ENCODE measurements at regions of chr11 and their contacts with region 1.

Region 1: GRCh38 chr11:61947486-61948210 is 2.5 kb upstream of the BEST1 start:
- DNase-seq: peak; percentile 88 to 95
- H3K4me3 ChIP-seq: no peak overlapping the region
- H3K27ac ChIP-seq: peak overlapping the region in 1 of 5 donors; percentile 15
- H3K4me1 ChIP-seq: peaks cover 7 to 29% (median 15%) of the 10 kb centered on the region in 4 donors
- H3K27me3 ChIP-seq: peaks cover 0 to 4% (median 0%) of the 10 kb centered on the region in 3 donors
- CTCF ChIP-seq: peak in 6 of 7 experiments; percentile 33 to 91 (median 85)
- EP300 ChIP-seq: no peak
- POLR2A ChIP-seq: no peak

Region 2: DNA sequence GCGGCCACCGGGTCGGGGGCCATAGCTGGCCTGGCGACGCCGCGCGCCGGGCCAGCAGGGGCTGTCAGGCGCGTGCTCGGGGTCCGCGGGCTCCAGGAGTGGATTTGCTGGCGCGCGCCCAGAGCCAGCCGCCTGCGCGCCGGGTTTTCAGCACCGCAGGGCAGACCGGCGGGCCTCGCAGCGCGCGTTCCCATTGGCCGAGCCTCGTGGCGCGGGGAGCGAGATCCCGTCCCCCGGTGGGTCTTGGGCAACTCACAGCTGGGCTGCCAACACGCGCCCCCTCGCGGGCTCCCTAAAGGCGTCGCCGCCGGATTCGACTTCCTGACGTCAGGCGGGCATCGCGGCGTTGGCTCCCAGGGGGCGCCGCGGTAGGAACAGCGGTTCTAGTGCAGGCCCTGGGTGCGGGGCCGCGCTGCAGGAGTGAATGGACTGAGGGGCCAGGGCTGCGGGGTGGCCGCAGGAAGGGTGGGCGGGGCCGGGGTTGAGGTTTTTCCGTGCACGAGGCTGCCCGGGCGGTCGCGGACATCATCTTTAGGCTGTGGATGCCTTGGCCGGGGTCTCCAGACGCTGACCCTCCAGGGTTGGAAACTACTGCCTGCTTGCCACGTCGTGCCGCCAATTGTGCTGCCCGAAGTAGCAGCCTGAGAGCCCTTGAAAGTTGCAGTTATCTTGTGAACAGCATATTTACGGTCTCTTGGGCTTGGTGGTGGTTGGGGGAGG is 130.8 kb before region 1 on chr11 and contains the start of gene FADS1:
- intact Hi-C with region 1: loop called (anchors 10 kb)
- DNase-seq: peak; percentile 83 to 97
- H3K4me3 ChIP-seq: peak within 1 kb of the TSS; percentile 60 to 78 (median 72)
- H3K27ac ChIP-seq: peak within 1 kb of the TSS; percentile 69 to 98 (median 93)
- H3K4me1 ChIP-seq: peaks cover 7 to 31% (median 25%) of the 10 kb centered on the region in 4 donors
- H3K27me3 ChIP-seq: peaks cover 0 to 13% (median 0%) of the 10 kb centered on the region in 3 donors
- CTCF ChIP-seq: peak in 4 of 7 experiments; percentile 5 to 51 (median 28)
- EP300 ChIP-seq: no peak
- POLR2A ChIP-seq: no peak
- total RNA-seq, gene FADS1: 11.7 to 56.5 (median 17.3) TPM in 4 of 5 donors, not detected in the other

Region 3: GRCh38 chr11:61904539-61905048 is 43.1 kb before region 1 on chr11:
- intact Hi-C with region 1: loop called (anchors 5 kb)
- DNase-seq: peak; percentile 81 to 88
- H3K4me3 ChIP-seq: peak overlapping the region; percentile 14 to 36 (median 30)
- H3K27ac ChIP-seq: peak overlapping the region in 2 of 5 donors; percentile 13 to 56
- H3K4me1 ChIP-seq: peaks cover 0 to 21% (median 8%) of the 10 kb centered on the region in 4 donors
- H3K27me3 ChIP-seq: no peaks in the 10 kb centered on the region
- CTCF ChIP-seq: no peak
- EP300 ChIP-seq: no peak
- POLR2A ChIP-seq: no peak

Region 4: DNA sequence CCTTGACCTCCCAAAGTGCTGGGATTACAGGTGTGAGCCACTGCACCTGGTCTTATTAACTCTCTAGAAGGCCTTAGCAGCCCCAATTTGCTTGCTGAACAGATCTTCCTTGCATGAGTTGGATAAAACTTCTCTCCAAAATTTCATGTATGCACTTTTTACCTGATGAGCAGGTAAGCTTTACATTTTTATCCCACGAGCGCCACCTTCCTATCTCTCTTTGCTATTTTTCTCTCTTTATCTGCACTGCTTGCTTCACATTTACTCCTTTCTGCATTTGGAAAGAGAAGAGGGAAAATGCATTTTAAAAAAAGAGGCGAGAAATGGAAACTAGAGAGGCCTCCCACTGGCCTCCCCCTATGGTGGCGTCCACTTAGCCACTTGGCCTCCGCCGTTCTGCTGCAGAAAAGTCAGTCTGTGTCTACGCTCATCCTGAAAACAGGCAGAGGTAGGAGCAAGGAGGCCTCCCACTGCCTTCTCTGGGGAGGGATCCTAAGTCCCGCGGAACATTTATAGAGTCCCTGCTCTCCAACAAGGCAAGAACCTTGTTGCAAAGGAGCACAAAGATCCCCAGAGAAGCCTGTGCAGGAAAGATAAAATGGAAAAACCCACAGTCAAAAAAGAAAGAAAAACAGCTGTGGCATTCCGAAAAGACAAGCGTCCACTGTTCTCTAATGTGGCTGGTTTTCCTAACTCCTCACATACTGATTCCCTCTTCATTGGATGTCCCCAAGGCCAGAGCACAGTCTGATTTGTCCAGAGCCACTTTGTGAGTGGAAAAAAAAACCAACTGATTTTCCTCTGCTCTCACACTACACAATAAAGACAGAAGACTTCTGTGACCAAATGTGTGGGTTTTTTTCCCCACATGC is 113.9 kb after region 1 on chr11:
- intact Hi-C with region 1: loop called (anchors 10 kb)
- DNase-seq: peak in 1 of 2 donors; percentile 44
- H3K4me3 ChIP-seq: no peak overlapping the region
- H3K27ac ChIP-seq: no peak overlapping the region
- H3K4me1 ChIP-seq: no peaks in the 10 kb centered on the region
- H3K27me3 ChIP-seq: no peaks in the 10 kb centered on the region
- CTCF ChIP-seq: peak in 3 of 7 experiments; percentile 31 to 58 (median 31)
- EP300 ChIP-seq: no peak
- POLR2A ChIP-seq: no peak